ENCODE measurements at regions of chr1 and their contacts with region 1.

Region 1: GRCh38 chr1:153967082-153968000 is at the start of gene CREB3L4:
- DNase-seq: peak; percentile 82 to 96 (median 93)
- H3K4me3 ChIP-seq: peak within 1 kb of the TSS; percentile 57 to 87 (median 74)
- H3K27ac ChIP-seq: peak within 1 kb of the TSS; percentile 42 to 98 (median 93)
- H3K27me3 ChIP-seq: no peaks in the 10 kb centered on the region
- CTCF ChIP-seq: peak; percentile 30 to 77 (median 66)
- total RNA-seq, gene CREB3L4: 1.5 to 11.6 (median 4.5) TPM

Region 2: DNA sequence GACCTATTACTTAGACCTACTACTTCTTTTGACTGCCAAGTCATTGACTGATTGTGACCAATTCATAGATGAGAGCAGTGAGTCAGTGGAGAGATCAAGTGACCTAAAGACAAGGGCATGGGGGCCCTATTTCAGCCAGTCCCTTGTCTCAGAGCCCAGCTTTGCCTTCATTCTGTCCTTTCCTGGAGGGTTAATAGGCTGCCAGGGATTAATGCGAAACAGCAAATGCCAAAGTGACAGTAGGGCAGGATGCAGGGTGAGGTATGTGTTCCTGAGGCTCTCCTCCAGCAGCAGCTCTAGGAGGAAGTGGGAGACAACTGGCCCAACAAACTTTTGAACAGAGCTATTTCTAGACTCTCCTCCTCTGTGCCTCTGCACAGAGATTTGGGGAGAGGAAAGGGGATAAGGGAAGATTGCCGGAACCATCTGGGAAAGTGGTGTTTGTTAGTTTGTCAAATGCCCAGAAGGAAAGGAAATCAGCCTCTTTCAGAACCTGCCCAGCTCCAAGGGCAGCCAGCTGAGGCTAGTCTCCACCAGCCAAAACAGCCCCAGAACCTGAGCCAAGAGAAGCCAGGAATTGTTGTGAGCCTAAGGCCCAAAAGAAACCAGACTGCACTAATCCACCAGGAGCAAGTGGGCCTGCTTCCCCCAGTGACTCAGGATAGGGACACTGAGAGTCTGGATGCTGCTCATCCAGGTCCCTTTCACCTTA is 413.4 kb before region 1 on chr1:
- intact Hi-C with region 1: no loop called
- DNase-seq: no peak
- H3K4me3 ChIP-seq: no peak overlapping the region
- H3K27ac ChIP-seq: peak overlapping the region in 5 of 59 donors; percentile 2 to 47 (median 21)
- H3K27me3 ChIP-seq: peaks cover 0 to under 1% (median 0%) of the 10 kb centered on the region in 45 donors
- CTCF ChIP-seq: no peak

Region 3: GRCh38 chr1:153796791-153797659 is 170.3 kb before region 1 on chr1:
- intact Hi-C with region 1: loop called (anchors 5 kb)
- DNase-seq: peak in 8 of 10 donors; percentile 53 to 91 (median 72)
- H3K4me3 ChIP-seq: peak overlapping the region in 3 of 59 donors; percentile 7 to 22 (median 15)
- H3K27ac ChIP-seq: no peak overlapping the region
- H3K27me3 ChIP-seq: no peaks in the 10 kb centered on the region
- CTCF ChIP-seq: peak; percentile 68 to 94 (median 90)

Region 4: DNA sequence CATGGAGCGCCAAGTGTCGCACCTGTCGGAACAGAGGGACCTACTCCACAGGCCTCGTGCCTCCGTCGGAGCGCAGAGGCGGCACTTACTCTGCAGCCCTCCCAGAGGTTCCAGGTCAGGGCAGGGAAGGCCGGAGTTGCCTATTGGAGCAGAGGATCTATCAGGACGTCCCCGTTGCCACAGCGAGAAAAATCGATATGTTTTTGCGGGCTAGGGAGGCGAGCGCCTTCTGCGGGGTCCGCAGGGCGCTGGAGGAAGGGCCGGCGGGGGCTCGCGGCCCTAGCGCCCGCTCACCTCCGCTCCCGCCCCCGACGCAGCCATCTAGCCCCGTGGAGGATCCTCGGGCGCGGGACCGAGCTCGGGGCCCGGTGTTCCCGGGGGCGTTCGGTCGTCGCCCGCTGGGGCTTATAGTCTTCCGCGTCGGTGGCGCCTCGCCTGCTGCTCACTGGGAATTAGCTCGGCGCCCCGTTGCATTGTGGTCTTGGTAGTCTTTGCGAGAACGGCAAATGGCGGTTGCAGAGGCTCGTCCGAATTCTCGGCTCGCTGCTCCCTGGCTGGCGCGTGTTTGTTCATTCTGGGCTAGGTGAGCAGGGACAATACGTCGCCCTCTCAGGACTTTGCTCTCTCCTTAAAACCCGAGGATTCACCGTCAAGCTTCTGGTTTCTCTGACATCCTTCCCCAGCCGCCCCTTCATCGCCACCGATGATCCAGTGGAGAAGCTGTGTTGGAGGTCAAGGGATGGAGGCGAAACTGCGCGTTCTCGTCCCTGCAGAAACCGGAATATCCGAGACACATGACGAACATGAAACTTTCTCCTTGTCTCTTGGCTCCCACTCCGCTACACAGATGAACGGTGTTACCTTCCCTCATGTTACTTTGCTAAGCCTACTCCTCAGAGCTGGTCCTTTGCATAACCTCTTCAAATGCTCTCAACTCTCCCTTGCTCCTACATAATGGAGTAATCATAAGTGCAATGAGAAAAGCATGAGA is 10.2 kb after region 1 on chr1 and contains the start of gene JTB:
- intact Hi-C with region 1: loop called in 1 of 2 experiments (anchors 1 kb)
- DNase-seq: peak; percentile 80 to 95 (median 92)
- H3K4me3 ChIP-seq: peak within 1 kb of the TSS; percentile 66 to 100 (median 97)
- H3K27ac ChIP-seq: peak within 1 kb of the TSS; percentile 73 to 99 (median 93)
- H3K27me3 ChIP-seq: no peaks in the 10 kb centered on the region
- CTCF ChIP-seq: peak in 32 of 56 donors; percentile 5 to 58 (median 33)
- total RNA-seq, gene JTB: 59.2 to 132 (median 78.9) TPM

Region 5: GRCh38 chr1:154097873-154098272 is 130.5 kb after region 1 on chr1:
- intact Hi-C with region 1: no loop called
- DNase-seq: no peak
- H3K4me3 ChIP-seq: no peak overlapping the region
- H3K27ac ChIP-seq: no peak overlapping the region
- H3K27me3 ChIP-seq: no peaks in the 10 kb centered on the region
- CTCF ChIP-seq: no peak

Measured in dorsolateral prefrontal cortex (tissue), 120 donors.